ENCODE measurements at regions of chr17 and their contacts with region 1.

Region 1: GRCh38 chr17:57955183-57955931 is at the start of gene CUEDC1:
- DNase-seq: peak; percentile 77 to 80
- H3K4me3 ChIP-seq: peak within 1 kb of the TSS; percentile 42 to 97 (median 79)
- H3K27ac ChIP-seq: peak within 1 kb of the TSS; percentile 74 to 97 (median 95)
- H3K4me1 ChIP-seq: peaks cover 15 to 33% of the 10 kb centered on the region in 2 donors
- H3K27me3 ChIP-seq: no peaks in the 10 kb centered on the region
- CTCF ChIP-seq: peak in 4 of 6 experiments; percentile 7 to 61 (median 46)
- POLR2A ChIP-seq: peak in 1 of 2 donors; percentile 56
- total RNA-seq, gene CUEDC1: 25.6 to 32.3 (median 29.9) TPM

Region 2: DNA sequence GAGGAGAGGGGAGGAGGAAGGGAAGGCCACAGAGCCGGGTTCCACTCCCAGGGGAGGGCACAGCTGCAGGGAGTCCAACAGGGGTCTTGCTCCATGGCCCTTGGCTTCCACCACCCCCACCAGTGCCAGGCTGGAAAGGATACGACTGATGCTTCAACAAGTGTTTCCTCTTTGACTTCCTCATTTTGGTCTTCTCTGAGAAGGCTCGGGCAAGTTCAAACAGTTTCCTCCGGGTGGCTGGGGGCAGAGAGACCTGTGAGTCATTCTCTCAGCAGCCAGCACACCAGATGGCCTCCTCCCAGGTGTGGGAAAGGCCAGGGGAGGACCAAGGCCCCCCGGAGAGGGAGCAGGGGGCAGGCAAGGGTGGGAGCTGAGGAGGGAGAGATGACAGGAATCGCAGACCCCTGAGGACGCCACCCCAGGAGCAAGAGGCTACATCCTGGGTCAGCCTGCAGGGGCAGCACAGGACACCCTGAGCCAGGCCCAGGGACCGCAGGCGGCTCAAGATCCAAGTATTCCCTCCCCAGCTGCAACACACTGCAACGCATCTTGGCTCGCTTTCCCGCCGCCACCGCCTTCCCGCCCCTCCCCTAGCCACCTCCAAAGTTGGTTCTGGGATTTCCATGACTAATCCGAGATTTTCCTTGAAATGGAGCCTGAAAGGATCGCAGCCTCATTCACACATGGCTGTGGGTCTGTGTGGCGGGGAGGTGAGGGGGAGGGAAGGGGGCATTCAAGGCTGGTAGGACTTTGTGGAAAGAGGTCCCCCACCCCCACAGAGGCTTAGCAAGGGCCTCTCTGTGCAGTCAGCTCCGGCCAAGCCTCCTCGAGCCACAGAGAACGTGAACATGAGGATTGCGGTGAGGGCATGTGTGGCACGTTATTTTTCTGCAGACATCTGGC is 87.1 kb before region 1 on chr17:
- intact Hi-C with region 1: loop called (anchors 5 kb)
- DNase-seq: peak in 1 of 2 donors; percentile 28
- H3K4me3 ChIP-seq: no peak overlapping the region
- H3K27ac ChIP-seq: peak overlapping the region in 2 of 3 donors; percentile 43 to 52
- H3K4me1 ChIP-seq: peaks cover 3 to 17% of the 10 kb centered on the region in 2 donors
- H3K27me3 ChIP-seq: no peaks in the 10 kb centered on the region
- CTCF ChIP-seq: peak in 1 of 6 experiments; percentile 6
- POLR2A ChIP-seq: no peak

Region 3: GRCh38 chr17:58052945-58053846 is 97.8 kb after region 1 on chr17:
- intact Hi-C with region 1: no loop called
- DNase-seq: no peak
- H3K4me3 ChIP-seq: no peak overlapping the region
- H3K27ac ChIP-seq: no peak overlapping the region
- H3K4me1 ChIP-seq: peaks cover 10 to 13% of the 10 kb centered on the region in 2 donors
- H3K27me3 ChIP-seq: no peaks in the 10 kb centered on the region
- CTCF ChIP-seq: no peak
- POLR2A ChIP-seq: no peak